ENCODE measurements at regions of chr6 and their contacts with region 1.

Region 1: DNA sequence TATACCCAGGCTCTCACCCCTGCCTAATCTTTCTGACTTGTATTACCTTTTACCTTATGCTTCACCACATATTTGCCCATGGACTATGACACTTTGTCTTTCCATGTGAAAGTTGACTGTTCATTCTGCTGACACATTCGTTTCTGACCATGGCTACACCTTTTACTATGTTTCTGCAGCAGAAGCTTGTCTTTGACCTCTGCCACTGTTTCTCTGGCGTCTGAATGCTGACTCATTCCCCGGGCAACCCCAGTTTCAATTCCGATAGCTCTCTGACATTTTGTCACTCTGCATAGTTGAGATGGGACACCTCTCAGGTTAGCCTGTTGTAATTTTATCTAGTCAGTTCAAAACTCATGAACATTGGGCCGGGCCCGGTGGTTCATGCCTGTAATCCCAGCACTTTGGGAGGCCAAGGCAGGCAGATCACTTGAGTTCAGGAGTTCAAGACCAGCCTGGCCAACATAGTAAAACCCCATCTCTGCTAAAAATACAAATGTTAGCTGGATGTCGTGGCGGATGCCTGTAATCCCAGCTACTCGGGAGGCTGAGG is 50.7 kb downstream of the SLC26A8 start:
- DNase-seq: peak; percentile 82
- H3K4me3 Mint-ChIP-seq: no peak overlapping the region
- H3K27ac Mint-ChIP-seq: no peak overlapping the region
- H3K4me1 Mint-ChIP-seq: peaks cover 8% of the 10 kb centered on the region
- H3K27me3 Mint-ChIP-seq: no peaks in the 10 kb centered on the region

Region 2: GRCh38 chr6:35920793-35921732 is 52.7 kb before region 1 on chr6 and contains the start of gene SRPK1:
- CTCF ChIA-PET with region 1: no interaction called
- POLR2A ChIA-PET with region 1: no interaction called
- intact Hi-C with region 1: loop called (anchors 5 kb)
- DNase-seq: peak; percentile 94
- H3K4me3 Mint-ChIP-seq: peak within 1 kb of the TSS; percentile 86
- H3K27ac Mint-ChIP-seq: peak within 1 kb of the TSS; percentile 96
- H3K4me1 Mint-ChIP-seq: peaks cover 41% of the 10 kb centered on the region
- H3K27me3 Mint-ChIP-seq: no peaks in the 10 kb centered on the region
- total RNA-seq, gene SRPK1: 134 to 143 TPM

Region 3: DNA sequence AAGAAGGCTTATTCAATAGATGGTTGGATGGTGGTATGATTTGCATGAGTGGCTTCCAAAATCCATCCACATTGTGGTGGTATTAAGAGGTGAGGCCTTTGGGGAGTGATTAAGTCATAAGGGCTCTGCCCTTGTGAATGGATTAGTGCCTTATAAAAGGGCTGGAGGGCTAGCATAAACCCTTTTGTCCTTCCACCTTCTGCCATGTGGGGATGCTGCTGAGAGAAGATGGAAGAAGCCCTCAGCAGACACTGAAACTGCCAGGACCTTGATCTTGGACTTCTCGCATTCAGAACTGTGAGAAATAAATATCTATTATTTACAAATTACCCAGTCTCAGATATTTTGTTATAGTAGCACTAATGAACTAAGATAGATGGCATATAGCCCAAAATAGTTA is 25.0 kb before region 1 on chr6:
- CTCF ChIA-PET with region 1: no interaction called
- POLR2A ChIA-PET with region 1: no interaction called
- intact Hi-C with region 1: loop called (anchors 1 kb)
- DNase-seq: no peak
- H3K4me3 Mint-ChIP-seq: no peak overlapping the region
- H3K27ac Mint-ChIP-seq: no peak overlapping the region
- H3K4me1 Mint-ChIP-seq: peaks cover 14% of the 10 kb centered on the region
- H3K27me3 Mint-ChIP-seq: no peaks in the 10 kb centered on the region